ENCODE measurements at regions of chr9 and their contacts with region 1.

Region 1: DNA sequence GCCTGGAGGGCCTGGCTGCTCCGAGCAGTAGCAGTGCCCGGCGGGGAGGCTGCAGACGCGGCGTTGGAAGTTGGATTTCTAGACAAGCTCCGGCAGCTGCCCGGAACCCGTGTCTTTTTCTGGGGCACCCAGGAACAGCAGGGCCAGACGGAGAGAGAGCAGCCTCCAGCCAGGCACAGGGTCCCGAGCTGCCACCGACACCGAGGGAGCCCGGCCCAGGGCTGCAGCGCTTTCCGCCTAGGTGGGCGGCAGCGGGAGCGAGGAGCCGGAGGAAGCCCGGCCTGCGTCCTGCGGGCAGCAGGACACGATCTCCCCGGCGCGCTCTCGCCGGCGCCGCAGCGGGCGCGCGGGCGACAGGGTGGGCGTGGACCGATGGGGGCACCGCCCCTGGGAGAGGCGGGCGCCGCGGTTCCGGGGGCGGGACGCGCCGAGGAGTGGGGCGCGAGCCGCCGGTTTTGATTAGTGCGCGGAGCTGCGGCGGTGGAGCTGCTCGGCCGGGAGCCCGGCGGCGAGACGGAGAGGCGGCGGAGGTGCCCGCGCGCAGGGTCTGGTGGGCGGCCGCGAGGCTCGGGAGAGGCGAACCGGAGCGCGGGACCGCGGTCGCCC is at the start of gene UGCG:
- DNase-seq: peak; percentile 91 to 95 (median 93)
- ATAC-seq: peak; percentile 93 to 99 (median 98)
- H3K4me3 ChIP-seq: peak within 1 kb of the TSS; percentile 82 to 99 (median 92)
- H3K27ac ChIP-seq: peak within 1 kb of the TSS; percentile 80 to 97 (median 94)
- H3K4me1 ChIP-seq: peaks cover 10 to 51% (median 30%) of the 10 kb centered on the region in 12 donors
- H3K27me3 ChIP-seq: no peaks in the 10 kb centered on the region
- CTCF ChIP-seq: no peak
- POLR2A ChIP-seq: peak; percentile 78 to 97
- total RNA-seq, gene UGCG: 10.5 to 52.0 (median 17.5) TPM

Region 2: GRCh38 chr9:111597817-111598729 is 298.4 kb before region 1 on chr9:
- intact Hi-C with region 1: loop called in 1 of 10 experiments (anchors 5 kb)
- DNase-seq: peak; percentile 52 to 79 (median 66)
- ATAC-seq: peak; percentile 48 to 66 (median 56)
- H3K4me3 ChIP-seq: peak overlapping the region; percentile 68 to 92 (median 76)
- H3K27ac ChIP-seq: peak overlapping the region in 11 of 12 donors; percentile 74 to 93 (median 88)
- H3K4me1 ChIP-seq: peaks cover 0 to 29% (median 2%) of the 10 kb centered on the region in 12 donors
- H3K27me3 ChIP-seq: no peaks in the 10 kb centered on the region
- CTCF ChIP-seq: peak; percentile 40 to 73 (median 62)
- POLR2A ChIP-seq: no peak

Region 3: DNA sequence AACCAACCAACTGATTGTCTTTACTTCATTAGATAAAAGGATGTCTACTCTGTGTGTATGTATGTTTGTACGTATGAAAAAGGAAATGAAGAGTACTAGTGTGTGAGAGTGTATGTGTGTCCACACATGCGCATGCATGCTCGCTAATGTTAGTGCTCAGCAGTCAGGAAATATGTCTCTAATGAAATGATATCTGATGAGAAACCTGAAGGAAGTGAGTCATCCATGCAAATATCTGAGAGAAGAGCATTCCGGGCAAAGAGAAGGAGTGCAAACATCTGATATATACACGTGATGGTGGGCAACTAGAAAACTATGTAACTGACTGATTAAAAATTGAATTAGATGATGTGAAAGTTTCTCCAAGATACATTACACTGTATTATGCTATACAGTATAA is 29.5 kb before region 1 on chr9:
- intact Hi-C with region 1: no loop called
- DNase-seq: no peak
- ATAC-seq: no peak
- H3K4me3 ChIP-seq: no peak overlapping the region
- H3K27ac ChIP-seq: no peak overlapping the region
- H3K4me1 ChIP-seq: no peaks in the 10 kb centered on the region
- H3K27me3 ChIP-seq: no peaks in the 10 kb centered on the region
- CTCF ChIP-seq: no peak
- POLR2A ChIP-seq: no peak

Region 4: DNA sequence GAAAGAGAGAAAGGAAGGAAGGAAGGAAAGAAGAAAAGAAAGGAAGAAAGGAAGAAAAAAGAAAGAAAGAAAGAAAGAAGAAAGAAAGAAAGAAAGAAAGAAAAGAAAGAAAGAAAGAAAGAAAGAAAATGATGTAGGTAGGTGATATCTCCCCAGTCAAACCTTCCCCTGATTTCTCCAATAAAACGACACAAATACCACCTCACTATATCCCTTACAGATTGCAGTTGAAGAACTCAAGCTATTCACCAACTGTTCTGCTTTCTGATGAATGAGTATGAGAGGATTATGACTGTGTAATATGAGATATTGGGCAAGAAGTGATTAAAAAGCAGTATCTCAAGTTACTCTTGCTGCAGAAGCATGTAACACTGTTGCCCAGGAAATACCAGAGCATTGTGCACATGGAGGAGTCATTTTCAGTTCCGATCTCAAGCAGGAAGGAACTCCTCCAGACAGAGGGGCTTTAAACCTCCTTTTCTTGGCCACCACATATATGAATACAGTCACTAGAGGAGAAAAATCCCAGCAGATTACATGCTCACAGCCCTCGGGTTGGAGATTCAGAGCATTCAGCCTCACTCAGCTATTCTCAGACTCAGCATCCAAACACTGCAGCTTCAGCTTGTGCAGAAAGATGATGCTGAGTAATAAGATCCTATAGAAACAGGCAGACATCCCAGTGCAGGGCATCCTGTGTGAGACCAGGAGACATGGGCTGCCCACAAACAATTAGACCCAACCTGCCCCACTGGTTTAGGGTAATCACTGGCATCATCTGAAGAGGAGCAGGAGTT is 61.6 kb after region 1 on chr9:
- intact Hi-C with region 1: loop called in 1 of 10 experiments (anchors 10 kb)
- DNase-seq: no peak
- ATAC-seq: peak; percentile 21 to 74 (median 47)
- H3K4me3 ChIP-seq: peak overlapping the region in 3 of 12 donors; percentile 5 to 28 (median 19)
- H3K27ac ChIP-seq: peak overlapping the region in 1 of 12 donors; percentile 77
- H3K4me1 ChIP-seq: peaks cover 0 to 43% (median 7%) of the 10 kb centered on the region in 12 donors
- H3K27me3 ChIP-seq: no peaks in the 10 kb centered on the region
- CTCF ChIP-seq: no peak
- POLR2A ChIP-seq: no peak

Region 5: GRCh38 chr9:112074250-112075008 is 178.0 kb after region 1 on chr9:
- intact Hi-C with region 1: loop called in 8 of 10 experiments (anchors 2 to 5 kb)
- DNase-seq: peak in 4 of 5 donors; percentile 57 to 68 (median 62)
- ATAC-seq: peak; percentile 78 to 90 (median 83)
- H3K4me3 ChIP-seq: peak overlapping the region in 4 of 12 donors; percentile 9 to 29 (median 15)
- H3K27ac ChIP-seq: peak overlapping the region in 11 of 12 donors; percentile 3 to 96 (median 72)
- H3K4me1 ChIP-seq: peaks cover 0 to 85% (median 13%) of the 10 kb centered on the region in 12 donors
- H3K27me3 ChIP-seq: no peaks in the 10 kb centered on the region
- CTCF ChIP-seq: peak; percentile 81 to 98 (median 91)
- POLR2A ChIP-seq: no peak

Region 6: DNA sequence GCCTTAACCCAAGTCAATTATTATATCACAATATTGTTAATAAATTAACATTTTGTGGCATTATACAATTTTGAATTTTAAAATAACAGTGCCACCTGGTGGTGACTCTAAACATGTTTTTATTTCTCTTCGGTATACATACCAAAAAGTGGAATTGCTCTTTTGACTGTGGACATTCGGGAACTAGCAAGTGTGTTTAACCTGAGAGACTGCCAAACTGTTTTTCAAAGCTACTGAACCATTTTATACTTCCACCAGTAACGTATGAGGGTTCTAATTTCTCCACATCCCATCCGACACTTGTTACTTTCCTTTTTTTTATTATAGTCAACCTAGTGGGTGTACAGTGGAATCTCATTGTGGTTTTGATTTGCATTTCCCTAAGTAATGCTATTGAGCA is 465.1 kb after region 1 on chr9:
- intact Hi-C with region 1: loop called in 1 of 10 experiments (anchors 10 kb)
- DNase-seq: no peak
- ATAC-seq: peak in 1 of 4 donors; percentile 60
- H3K4me3 ChIP-seq: no peak overlapping the region
- H3K27ac ChIP-seq: no peak overlapping the region
- H3K4me1 ChIP-seq: no peaks in the 10 kb centered on the region
- H3K27me3 ChIP-seq: no peaks in the 10 kb centered on the region
- CTCF ChIP-seq: peak; percentile 44 to 73 (median 65)
- POLR2A ChIP-seq: no peak

Region 7: DNA sequence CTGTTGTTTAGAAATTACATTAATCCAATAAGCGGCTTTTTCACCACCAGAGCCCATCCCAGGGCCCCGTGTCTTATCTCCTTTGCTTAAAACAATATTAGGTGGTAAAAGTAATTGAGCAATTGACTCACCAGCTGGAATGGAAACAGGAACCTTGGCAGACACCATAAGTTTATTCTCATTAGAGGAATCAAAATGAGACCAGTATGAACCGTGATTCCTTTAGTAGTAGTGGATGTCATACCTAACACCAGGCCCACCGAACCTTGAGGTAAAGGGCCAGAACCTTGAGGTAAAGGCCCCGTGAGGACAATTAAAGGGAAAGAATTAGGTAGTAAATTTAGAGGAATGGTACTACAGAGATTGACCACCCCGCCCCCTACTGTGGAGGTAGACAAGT is 500.0 kb after region 1 on chr9:
- intact Hi-C with region 1: no loop called
- DNase-seq: no peak
- ATAC-seq: no peak
- H3K4me3 ChIP-seq: no peak overlapping the region
- H3K27ac ChIP-seq: no peak overlapping the region
- H3K4me1 ChIP-seq: peaks cover 0 to 3% (median 0%) of the 10 kb centered on the region in 12 donors
- H3K27me3 ChIP-seq: no peaks in the 10 kb centered on the region
- CTCF ChIP-seq: no peak
- POLR2A ChIP-seq: no peak